ENCODE measurements at regions of chr6 and their contacts with region 1.

Region 1: GRCh38 chr6:106300944-106301343 is 24.6 kb downstream of the ATG5 start:
- DNase-seq: no peak
- ATAC-seq: peak in 1 of 2 donors; percentile 41
- H3K4me3 ChIP-seq: no peak overlapping the region
- H3K27ac ChIP-seq: no peak overlapping the region
- H3K4me1 ChIP-seq: peaks cover 0 to 7% of the 10 kb centered on the region in 2 donors
- H3K27me3 ChIP-seq: no peaks in the 10 kb centered on the region
- CTCF ChIP-seq: peak in 4 of 5 experiments; percentile 26 to 46 (median 32)
- POLR2A ChIP-seq: no peak

Region 2: GRCh38 chr6:105484238-105485161 is 816.4 kb before region 1 on chr6:
- in situ Hi-C with region 1: loop called in 1 of 4 experiments (anchors 10 kb)
- intact Hi-C with region 1: loop called (anchors 1 kb)
- DNase-seq: no peak
- ATAC-seq: peak in 1 of 2 donors; percentile 46
- H3K4me3 ChIP-seq: no peak overlapping the region
- H3K27ac ChIP-seq: no peak overlapping the region
- H3K4me1 ChIP-seq: peaks cover 0 to 3% of the 10 kb centered on the region in 2 donors
- H3K27me3 ChIP-seq: no peaks in the 10 kb centered on the region
- CTCF ChIP-seq: peak; percentile 61 to 89 (median 77)
- POLR2A ChIP-seq: no peak

Region 3: DNA sequence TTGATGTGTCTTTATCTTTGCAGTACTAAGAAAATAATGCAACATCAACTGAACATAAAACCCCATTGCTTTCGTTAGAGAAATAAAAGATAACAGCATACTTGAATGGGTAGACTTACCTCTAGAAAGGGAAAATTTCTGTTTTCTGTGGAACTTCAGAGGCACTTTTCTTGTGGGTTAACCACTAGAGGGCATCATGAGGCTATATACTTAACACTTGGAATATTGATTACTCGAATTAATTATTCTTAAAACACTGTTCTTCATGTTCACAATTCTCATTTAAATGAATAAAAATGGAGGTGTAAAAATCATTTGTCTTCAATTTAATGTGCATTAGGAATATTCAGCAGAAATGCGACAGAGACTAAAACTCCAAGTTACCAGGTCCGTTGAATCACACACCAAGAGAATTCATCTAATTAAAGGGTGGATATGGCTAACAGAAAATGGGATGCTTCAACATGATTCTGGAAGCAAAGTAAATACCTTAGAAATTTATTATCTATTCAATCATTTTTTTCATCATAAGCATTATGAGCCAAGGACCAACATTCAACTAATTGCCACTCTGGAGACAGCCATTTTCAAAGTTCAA is 567.3 kb before region 1 on chr6:
- in situ Hi-C with region 1: loop called in 1 of 4 experiments (anchors 10 kb)
- intact Hi-C with region 1: loop called (anchors 10 kb)
- DNase-seq: no peak
- ATAC-seq: no peak
- H3K4me3 ChIP-seq: no peak overlapping the region
- H3K27ac ChIP-seq: no peak overlapping the region
- H3K4me1 ChIP-seq: no peaks in the 10 kb centered on the region
- H3K27me3 ChIP-seq: no peaks in the 10 kb centered on the region
- CTCF ChIP-seq: peak; percentile 44 to 64 (median 56)
- POLR2A ChIP-seq: no peak

Region 4: GRCh38 chr6:106225581-106225980 is 75.4 kb before region 1 on chr6:
- in situ Hi-C with region 1: no loop called
- intact Hi-C with region 1: no loop called
- DNase-seq: no peak
- ATAC-seq: no peak
- H3K4me3 ChIP-seq: no peak overlapping the region
- H3K27ac ChIP-seq: no peak overlapping the region
- H3K4me1 ChIP-seq: peaks cover 0 to 5% of the 10 kb centered on the region in 2 donors
- H3K27me3 ChIP-seq: no peaks in the 10 kb centered on the region
- CTCF ChIP-seq: no peak
- POLR2A ChIP-seq: no peak

Region 5: DNA sequence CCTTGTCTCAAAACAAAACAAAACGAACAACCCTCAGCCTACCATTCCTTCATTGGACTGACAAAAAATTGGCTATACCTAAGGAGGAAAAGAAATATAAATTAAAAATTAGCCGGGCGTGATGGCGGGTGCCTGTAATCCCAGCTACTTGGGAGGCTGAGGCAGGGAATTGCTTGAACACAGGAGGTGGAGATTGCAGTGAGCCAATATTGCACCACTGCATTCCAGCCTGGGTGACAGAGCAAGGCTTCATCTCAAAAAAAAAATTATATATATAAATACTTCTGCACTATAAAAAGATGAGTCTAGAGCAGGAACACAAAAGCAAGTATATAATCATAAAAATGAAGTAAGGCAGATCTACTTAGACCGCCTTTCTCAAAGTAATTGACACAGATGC is 169.4 kb after region 1 on chr6:
- in situ Hi-C with region 1: no loop called
- intact Hi-C with region 1: no loop called
- DNase-seq: no peak
- ATAC-seq: no peak
- H3K4me3 ChIP-seq: no peak overlapping the region
- H3K27ac ChIP-seq: no peak overlapping the region
- H3K4me1 ChIP-seq: no peaks in the 10 kb centered on the region
- H3K27me3 ChIP-seq: no peaks in the 10 kb centered on the region
- CTCF ChIP-seq: no peak
- POLR2A ChIP-seq: no peak

Measured in gastrocnemius medialis (tissue), 4 donors.